Activated CD4-positive, alpha-beta memory T cell treated with anti-CD3 and anti-CD28 coated beads, Interleukin-2, amount 10 ng/mL, durations not matched to agents 7 days and 5 days (primary cell): ENCODE measurements at regions of chr7 and their contacts with region 1.

Region 1: GRCh38 chr7:36366718-36367560 is 22.7 kb upstream of the ANLN start:
- DNase-seq: peak; percentile 93
- H3K4me3 Mint-ChIP-seq: peak overlapping the region; percentile 89
- H3K27ac Mint-ChIP-seq: no peak overlapping the region
- H3K4me1 Mint-ChIP-seq: peaks cover 9% of the 10 kb centered on the region
- H3K27me3 Mint-ChIP-seq: peaks cover 39% of the 10 kb centered on the region

Region 2: DNA sequence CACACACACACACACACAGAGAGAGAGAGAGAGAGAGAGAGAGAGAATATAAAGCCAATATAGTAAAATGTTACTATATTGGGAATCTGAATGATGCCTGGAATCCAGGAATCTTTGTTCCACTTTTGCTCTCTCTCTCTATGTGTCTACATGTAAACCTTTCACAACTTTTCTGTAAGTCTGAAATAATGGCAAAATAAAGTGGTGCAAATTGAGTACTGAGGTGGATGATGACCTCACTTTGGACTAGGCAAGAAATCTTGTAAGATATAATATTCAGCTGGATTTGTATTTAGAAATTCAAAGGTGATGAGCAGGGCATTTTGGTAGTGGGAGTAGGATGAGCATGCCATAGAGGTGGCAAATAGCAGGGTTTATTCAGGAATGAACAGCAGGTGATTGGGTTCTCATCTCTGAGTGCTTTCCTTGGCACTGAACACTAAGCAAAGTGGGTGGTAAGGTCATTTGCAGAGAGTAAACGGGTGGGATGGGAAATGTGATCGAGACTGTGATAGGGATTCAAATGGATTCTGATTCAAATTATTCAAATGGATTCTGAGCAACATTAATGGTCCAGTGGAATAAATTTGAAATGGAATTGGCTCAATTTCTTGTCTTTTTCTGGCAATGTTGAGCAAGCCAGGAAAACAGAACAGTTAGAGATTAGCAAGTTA is 13.0 kb after region 1 on chr7:
- CTCF ChIA-PET with region 1: interaction called, 10 read pairs
- POLR2A ChIA-PET with region 1: interaction called, 3 read pairs
- DNase-seq: no peak
- H3K4me3 Mint-ChIP-seq: no peak overlapping the region
- H3K27ac Mint-ChIP-seq: no peak overlapping the region
- H3K4me1 Mint-ChIP-seq: peaks cover 15% of the 10 kb centered on the region
- H3K27me3 Mint-ChIP-seq: peaks cover 38% of the 10 kb centered on the region

Region 3: DNA sequence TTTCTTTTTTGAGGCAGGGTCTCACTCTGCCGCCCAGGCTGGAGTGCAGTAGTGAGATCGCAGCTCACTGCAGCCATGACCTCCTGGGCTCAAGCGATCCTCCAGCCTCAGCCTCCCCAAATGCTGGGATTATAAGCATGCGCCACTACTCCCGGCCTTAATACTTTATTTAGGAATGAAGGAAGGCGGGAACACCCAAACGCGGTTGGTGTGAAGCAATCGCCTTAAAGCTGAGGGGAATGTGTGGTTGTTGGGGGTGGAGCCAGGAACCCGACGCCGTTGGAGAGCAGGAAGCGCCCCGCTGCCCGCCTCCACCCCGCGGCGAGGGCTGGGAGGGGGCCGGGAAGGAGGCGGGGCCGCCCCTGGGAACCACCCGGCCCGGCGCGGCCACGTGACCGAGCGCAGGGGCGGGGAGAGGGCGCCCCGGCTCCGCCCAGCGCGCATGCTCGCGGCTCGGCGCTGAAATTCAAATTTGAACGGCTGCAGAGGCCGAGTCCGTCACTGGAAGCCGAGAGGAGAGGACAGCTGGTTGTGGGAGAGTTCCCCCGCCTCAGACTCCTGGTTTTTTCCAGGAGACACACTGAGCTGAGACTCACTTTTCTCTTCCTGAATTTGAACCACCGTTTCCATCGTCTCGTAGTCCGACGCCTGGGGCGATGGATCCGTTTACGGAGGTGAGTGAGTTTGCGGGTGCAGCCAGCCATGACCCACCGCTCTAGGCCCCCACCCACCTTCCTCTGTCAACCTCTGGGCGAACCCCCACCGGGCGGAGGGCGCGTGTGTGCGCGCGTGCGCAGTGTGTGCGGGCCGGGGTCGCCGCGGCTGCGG is 22.6 kb after region 1 on chr7 and contains the start of gene ANLN:
- CTCF ChIA-PET with region 1: interaction called, 77 read pairs
- POLR2A ChIA-PET with region 1: interaction called, 31 read pairs
- DNase-seq: peak; percentile 89
- H3K4me3 Mint-ChIP-seq: peak within 1 kb of the TSS; percentile 91
- H3K27ac Mint-ChIP-seq: peak within 1 kb of the TSS; percentile 78
- H3K4me1 Mint-ChIP-seq: peaks cover 40% of the 10 kb centered on the region
- H3K27me3 Mint-ChIP-seq: peaks cover 4% of the 10 kb centered on the region
- total RNA-seq, gene ANLN: 65.1 to 69.0 TPM